ENCODE measurements at regions of chr9 and their contacts with region 1.

Region 1: GRCh38 chr9:126805546-126806262 is 864 bp downstream of the ZBTB43 start:
- DNase-seq: no peak
- ATAC-seq: peak; percentile 67; the same call in 1 of the 2 replicates
- H3K4me3 ChIP-seq: peak overlapping the region; percentile 80 to 81
- H3K27ac ChIP-seq: peak overlapping the region; percentile 52
- H3K4me1 ChIP-seq: peaks cover 8% of the 10 kb centered on the region
- H3K27me3 ChIP-seq: no peaks in the 10 kb centered on the region
- CTCF ChIP-seq: no peak

Region 2: DNA sequence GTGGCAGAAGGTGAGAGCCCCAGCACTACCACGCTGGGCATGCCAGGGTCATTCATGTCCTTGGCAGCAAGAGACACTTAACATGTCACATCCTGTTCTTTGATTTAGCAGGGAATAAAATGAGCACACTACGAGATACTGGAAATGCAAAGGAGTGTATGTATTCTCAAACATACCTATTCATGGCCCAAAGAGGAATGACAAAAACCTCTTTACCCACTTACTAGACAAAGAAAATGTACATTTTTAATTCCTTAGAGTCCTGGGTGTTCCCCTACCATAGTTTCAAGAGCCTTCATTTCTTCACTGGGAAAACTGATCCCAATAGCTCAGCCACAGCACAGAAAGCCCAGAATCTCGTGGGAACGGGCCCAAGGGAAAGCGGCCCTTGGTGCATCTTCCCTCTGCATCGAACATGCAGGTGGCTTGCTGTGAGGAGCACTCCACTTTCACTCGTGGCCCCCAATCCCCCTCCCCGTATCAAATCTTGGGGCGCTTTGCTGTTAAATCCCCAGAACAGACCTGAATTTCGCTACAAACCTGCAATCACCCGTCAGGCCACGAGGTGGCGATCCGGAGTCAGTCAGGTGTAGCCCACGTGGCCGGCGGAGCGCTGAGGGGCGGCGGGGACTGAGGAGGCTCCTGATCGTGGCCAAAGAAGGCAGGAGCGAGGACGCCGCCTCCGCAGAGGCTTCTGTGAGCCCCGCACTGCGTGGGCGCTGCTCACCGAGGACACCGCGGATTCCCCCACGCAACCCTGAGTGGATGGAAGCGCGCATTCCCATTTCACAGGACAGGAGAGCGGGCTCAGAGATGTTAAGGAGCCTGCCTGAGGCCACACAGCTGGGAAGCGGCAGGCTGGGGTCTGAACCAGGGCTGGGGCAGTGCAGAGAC is 100.6 kb before region 1 on chr9:
- CTCF ChIA-PET with region 1: no interaction called
- POLR2A ChIA-PET with region 1: no interaction called
- in situ Hi-C with region 1: no loop called
- intact Hi-C with region 1: no loop called
- DNase-seq: peak; percentile 57
- ATAC-seq: peak; percentile 62
- H3K4me3 ChIP-seq: peak overlapping the region in 1 of 2 experiments; percentile 27; a peak in 1 of 4 replicates
- H3K27ac ChIP-seq: no peak overlapping the region
- H3K4me1 ChIP-seq: peaks cover 4% of the 10 kb centered on the region
- H3K27me3 ChIP-seq: no peaks in the 10 kb centered on the region
- CTCF ChIP-seq: peak; percentile 89

Region 3: DNA sequence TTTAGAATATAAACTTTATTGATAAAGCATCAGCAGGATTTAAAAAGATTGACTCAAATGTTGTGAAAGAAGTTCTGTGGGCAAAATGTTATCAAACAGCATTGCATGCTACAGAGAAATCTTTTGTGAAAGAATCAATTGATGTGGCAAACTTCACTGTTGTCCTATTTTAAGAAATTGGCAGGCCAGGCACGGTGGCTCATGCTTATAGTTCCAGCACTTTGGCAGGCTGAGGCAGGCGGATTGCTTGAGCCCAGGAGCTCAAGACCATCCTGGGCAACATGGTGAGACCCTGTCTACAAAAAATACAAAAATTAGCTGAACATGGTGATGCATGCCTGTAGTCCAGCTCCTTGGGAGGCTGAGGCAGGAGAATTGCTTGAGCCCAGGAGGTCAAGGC is 16.6 kb after region 1 on chr9:
- CTCF ChIA-PET with region 1: no interaction called
- POLR2A ChIA-PET with region 1: interaction called, 11 read pairs
- in situ Hi-C with region 1: no loop called
- intact Hi-C with region 1: no loop called
- DNase-seq: no peak
- ATAC-seq: no peak
- H3K4me3 ChIP-seq: no peak overlapping the region
- H3K27ac ChIP-seq: no peak overlapping the region
- H3K4me1 ChIP-seq: no peaks in the 10 kb centered on the region
- H3K27me3 ChIP-seq: no peaks in the 10 kb centered on the region
- CTCF ChIP-seq: no peak

Region 4: DNA sequence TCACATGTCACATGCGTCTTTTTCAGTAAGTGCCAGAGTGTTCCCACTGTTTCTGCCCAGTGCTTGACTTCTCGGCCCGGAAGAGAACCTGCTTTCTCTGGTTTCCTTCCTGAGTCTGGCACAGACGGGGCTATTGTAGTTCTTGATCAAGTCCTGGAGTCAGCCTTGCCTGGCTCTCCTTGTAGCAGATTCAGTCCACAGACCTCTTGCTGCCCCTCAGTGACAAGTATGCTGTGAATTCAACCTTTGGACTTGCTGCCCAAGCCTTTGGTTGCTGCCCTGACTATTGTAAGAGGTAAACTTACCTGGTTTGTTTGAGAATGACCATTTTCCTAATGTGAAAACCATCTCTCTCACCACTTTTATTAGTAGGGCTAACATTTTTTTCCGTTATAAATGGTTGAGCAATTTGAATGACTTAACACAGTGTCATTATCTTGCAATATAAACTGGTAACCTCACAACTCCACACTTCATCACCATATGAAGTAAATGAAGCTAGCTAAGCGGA is 79.5 kb after region 1 on chr9:
- CTCF ChIA-PET with region 1: no interaction called
- POLR2A ChIA-PET with region 1: no interaction called
- in situ Hi-C with region 1: no loop called
- intact Hi-C with region 1: no loop called
- DNase-seq: no peak
- ATAC-seq: no peak
- H3K4me3 ChIP-seq: no peak overlapping the region
- H3K27ac ChIP-seq: no peak overlapping the region
- H3K4me1 ChIP-seq: no peaks in the 10 kb centered on the region
- H3K27me3 ChIP-seq: no peaks in the 10 kb centered on the region
- CTCF ChIP-seq: no peak